ENCODE measurements at regions of chr3 and their contacts with region 1.

Region 1: GRCh38 chr3:24185738-24186384 is 240.8 kb downstream of the NR1D2 start:
- DNase-seq: peak; percentile 43
- H3K4me3 Mint-ChIP-seq: no peak overlapping the region
- H3K27ac Mint-ChIP-seq: no peak overlapping the region
- H3K4me1 Mint-ChIP-seq: peaks cover 23% of the 10 kb centered on the region
- H3K27me3 Mint-ChIP-seq: no peaks in the 10 kb centered on the region
- CTCF ChIP-seq: peak; percentile 37

Region 2: GRCh38 chr3:24101676-24102168 is 84.1 kb before region 1 on chr3:
- CTCF ChIA-PET with region 1: no interaction called
- intact Hi-C with region 1: loop called (anchors 5 kb)
- DNase-seq: no peak
- H3K4me3 Mint-ChIP-seq: peak overlapping the region; percentile 12
- H3K27ac Mint-ChIP-seq: peak overlapping the region; percentile 82
- H3K4me1 Mint-ChIP-seq: peaks cover 30% of the 10 kb centered on the region
- H3K27me3 Mint-ChIP-seq: no peaks in the 10 kb centered on the region
- CTCF ChIP-seq: no peak

Region 3: DNA sequence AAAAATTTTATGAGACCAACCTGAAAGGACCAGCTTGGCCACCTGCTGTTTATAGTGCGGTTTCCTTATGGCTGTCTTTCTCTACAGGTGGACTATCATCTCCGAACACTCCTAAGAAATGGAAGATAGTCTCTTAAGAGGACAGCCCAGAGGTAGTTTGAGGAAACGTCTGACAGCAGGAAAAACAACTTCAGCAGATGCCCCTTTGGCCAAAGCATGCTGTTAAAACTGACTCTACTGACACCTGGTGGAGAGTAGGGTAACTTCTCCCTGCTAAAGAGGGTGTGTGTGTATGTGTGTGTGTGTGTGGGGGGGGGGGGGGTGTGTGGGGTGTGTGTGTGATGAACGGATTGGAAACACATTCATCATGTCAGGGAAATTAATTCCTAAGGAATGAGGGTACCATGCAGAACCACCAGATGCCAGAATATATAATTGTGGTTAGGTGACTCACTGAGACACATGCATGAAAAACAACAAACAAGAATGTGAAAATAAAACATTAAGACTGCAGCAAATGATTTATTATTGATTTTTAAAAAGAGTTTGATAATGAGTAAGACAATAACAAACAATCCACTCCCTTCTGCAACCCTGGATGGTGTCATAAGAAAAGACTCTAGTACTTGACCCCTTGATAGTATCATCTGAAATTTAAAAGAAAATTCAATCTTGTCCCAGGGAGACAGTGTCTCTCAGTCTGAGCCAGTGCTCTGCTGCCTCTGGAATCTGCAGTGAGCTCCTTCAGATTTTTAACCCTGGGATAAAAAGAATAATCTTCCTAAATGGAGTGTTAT is 52.3 kb after region 1 on chr3:
- CTCF ChIA-PET with region 1: interaction called, 5 read pairs
- intact Hi-C with region 1: loop called (anchors 1 kb)
- DNase-seq: peak; percentile 70
- H3K4me3 Mint-ChIP-seq: no peak overlapping the region
- H3K27ac Mint-ChIP-seq: peak overlapping the region; percentile 0
- H3K4me1 Mint-ChIP-seq: peaks cover 35% of the 10 kb centered on the region
- H3K27me3 Mint-ChIP-seq: no peaks in the 10 kb centered on the region
- CTCF ChIP-seq: peak; percentile 58

Region 4: DNA sequence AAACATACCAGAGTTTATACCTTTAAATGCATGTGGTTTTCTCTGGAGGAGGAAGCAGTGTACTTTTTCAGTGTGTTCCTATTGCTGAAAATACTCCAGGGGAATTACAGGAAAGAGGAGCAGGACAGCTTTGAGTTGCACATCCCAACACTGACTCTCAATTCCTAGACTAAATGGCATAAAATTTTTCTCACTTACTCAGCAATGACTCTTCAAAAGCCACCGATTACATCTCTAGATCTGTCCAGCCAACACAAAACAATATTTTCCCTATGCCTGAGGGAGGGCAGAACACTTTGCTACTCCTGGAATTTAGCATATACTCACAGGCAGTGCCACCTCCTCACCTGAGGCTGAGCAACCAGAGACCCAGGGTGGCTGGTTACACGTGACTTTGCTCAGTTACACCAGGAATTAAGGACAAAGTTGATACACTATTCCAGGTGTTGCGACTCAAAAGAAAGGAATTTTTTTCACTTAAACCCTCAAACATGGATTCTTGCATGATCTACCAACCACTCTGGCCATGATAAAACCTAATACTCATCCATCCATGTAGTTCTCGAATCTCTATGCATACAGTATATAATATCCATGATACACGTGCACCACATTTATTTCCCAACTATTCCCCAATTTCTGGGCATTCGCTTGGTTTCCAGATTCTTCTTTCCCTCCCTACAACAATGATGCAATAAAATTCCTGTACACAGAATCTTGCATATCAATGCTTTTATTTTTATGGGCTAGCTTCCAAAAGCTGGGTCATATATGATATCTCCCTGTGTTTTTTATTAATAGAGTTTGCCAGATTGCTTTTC is 114.2 kb after region 1 on chr3:
- CTCF ChIA-PET with region 1: no interaction called
- intact Hi-C with region 1: no loop called
- DNase-seq: peak; percentile 34
- H3K4me3 Mint-ChIP-seq: no peak overlapping the region
- H3K27ac Mint-ChIP-seq: peak overlapping the region; percentile 73
- H3K4me1 Mint-ChIP-seq: peaks cover 21% of the 10 kb centered on the region
- H3K27me3 Mint-ChIP-seq: no peaks in the 10 kb centered on the region
- CTCF ChIP-seq: no peak

Region 5: GRCh38 chr3:24640330-24640877 is 454.5 kb after region 1 on chr3:
- CTCF ChIA-PET with region 1: interaction called, 3 read pairs
- intact Hi-C with region 1: loop called (anchors 1 kb)
- DNase-seq: peak; percentile 32
- H3K4me3 Mint-ChIP-seq: no peak overlapping the region
- H3K27ac Mint-ChIP-seq: no peak overlapping the region
- H3K4me1 Mint-ChIP-seq: peaks cover 20% of the 10 kb centered on the region
- H3K27me3 Mint-ChIP-seq: no peaks in the 10 kb centered on the region
- CTCF ChIP-seq: peak; percentile 59

Region 6: DNA sequence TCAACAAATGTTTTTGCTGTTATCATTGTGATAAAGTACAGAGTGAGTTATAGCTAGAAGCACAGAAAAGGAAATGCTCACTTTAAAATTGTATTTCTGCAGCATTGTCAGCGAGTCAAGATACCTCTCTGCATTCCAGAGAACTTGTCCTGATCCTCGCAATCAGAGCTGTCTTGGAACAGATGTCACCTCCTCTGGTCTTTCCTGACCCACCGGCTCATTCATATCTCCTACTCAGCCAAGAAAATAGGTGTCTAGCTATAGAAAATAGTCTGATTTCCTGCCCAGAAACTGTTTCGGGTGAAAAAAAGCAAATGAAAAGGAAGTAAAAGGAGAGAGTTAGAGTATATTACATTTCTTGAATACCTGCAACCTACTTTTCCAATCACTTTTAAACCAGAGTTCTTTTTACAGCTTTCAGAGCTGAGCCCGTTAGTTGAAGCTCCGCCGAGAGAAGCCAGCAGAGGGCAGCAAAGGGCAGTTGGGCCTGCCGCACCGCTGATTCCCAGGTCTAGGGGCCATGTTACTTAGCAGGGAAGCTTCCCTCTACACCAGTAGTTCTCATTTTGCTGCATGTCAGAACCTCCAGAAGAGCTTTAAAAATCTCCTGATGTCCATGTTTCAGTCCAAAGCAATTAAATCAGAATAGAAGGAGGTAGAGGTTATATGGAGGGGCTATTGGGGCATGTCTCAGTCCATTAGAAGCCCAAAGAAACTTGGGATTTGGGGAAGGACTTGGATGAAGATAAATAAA is 494.5 kb after region 1 on chr3:
- CTCF ChIA-PET with region 1: interaction called, 13 read pairs
- intact Hi-C with region 1: loop called (anchors 2 kb)
- DNase-seq: peak; percentile 84
- H3K4me3 Mint-ChIP-seq: no peak overlapping the region
- H3K27ac Mint-ChIP-seq: no peak overlapping the region
- H3K4me1 Mint-ChIP-seq: peaks cover 20% of the 10 kb centered on the region
- H3K27me3 Mint-ChIP-seq: no peaks in the 10 kb centered on the region
- CTCF ChIP-seq: peak; percentile 83